Activated CD8-positive, alpha-beta T cell treated with anti-CD3 and anti-CD28 coated beads, Interleukin-2, amount 10 ng/mL, durations not matched to agents 7 days and 5 days (primary cell): ENCODE measurements at regions of chr19 and their contacts with region 1.

Region 1: DNA sequence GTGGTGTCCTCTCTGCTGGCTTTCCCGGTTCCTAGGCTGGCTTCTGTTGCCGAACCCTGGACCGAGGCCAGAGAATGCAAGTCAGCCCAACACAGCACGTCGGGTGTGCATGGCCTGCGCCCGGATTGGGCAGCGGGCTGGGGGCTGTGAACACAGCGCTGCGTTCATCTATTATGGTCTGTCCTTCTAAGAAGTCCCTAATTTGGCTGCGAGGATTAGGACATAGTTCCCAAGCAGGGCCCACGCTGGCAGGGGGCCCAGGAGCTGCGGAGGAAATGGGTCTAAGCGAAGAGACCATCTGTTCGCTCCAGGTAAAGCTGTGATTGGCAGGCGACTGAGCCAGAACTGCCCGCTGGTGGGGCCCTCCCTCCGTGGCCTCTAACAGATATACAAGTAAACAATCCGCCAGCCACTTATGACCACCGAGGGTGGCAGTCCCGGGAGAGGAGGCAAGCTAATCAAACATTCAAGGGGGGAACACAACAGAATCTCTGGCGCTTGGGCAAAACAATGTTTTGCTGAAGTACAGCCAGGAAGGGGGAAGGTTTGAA is 6.0 kb downstream of the SYCE2 start:
- DNase-seq: no peak
- ATAC-seq: no peak
- H3K4me3 Mint-ChIP-seq: no peak overlapping the region
- H3K27ac Mint-ChIP-seq: peak overlapping the region; percentile 98
- H3K4me1 Mint-ChIP-seq: peaks cover 31% of the 10 kb centered on the region
- H3K27me3 Mint-ChIP-seq: no peaks in the 10 kb centered on the region

Region 2: GRCh38 chr19:12867120-12868099 is 45.7 kb before region 1 on chr19:
- CTCF ChIA-PET with region 1: no interaction called
- POLR2A ChIA-PET with region 1: no interaction called
- DNase-seq: peak; percentile 80
- ATAC-seq: peak; percentile 81
- H3K4me3 Mint-ChIP-seq: peak overlapping the region; percentile 64
- H3K27ac Mint-ChIP-seq: peak overlapping the region; percentile 5
- H3K4me1 Mint-ChIP-seq: peaks cover 18% of the 10 kb centered on the region
- H3K27me3 Mint-ChIP-seq: no peaks in the 10 kb centered on the region

Region 3: DNA sequence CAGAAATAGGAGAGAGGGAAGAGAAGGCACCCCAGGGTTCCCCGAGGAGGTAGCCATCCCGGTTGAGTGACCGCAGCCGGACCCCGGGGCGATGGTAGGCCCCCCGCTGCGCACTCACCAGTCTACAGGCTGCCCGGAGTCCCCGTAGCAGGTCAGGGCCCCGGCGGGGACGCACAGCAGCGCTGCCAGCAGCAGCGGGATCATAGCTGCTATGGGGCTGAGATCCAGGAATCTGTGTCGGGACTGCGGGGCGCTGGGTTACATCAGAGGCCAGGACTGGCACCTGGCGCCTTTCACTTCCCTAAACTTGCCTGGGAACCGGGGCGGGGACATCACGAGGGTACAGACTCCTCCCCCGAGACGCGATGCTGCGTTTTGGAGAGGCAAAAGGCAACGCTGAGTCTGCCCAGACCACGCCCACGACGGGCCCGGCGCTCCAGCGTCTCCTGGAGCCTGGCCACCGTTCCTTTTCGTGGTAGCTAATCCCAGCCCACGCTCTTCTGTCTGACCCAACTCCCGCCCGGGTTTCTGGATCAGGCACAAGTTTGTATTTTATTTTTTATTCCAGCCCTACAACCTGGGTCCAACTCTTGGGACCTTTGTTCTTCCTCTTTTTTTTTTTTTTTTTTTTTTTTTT is 31.8 kb before region 1 on chr19 and contains the start of gene DNASE2:
- CTCF ChIA-PET with region 1: interaction called, 23 read pairs
- POLR2A ChIA-PET with region 1: interaction called, 5 read pairs
- DNase-seq: peak; percentile 95
- ATAC-seq: peak; percentile 79
- H3K4me3 Mint-ChIP-seq: peak within 1 kb of the TSS; percentile 81
- H3K27ac Mint-ChIP-seq: peak within 1 kb of the TSS; percentile 87
- H3K4me1 Mint-ChIP-seq: peaks cover 33% of the 10 kb centered on the region
- H3K27me3 Mint-ChIP-seq: no peaks in the 10 kb centered on the region
- total RNA-seq, gene DNASE2: 26.1 to 27.4 TPM

Region 4: GRCh38 chr19:12890787-12891552 is 22.1 kb before region 1 on chr19 and contains the start of gene GCDH:
- CTCF ChIA-PET with region 1: interaction called, 23 read pairs
- POLR2A ChIA-PET with region 1: interaction called, 11 read pairs
- DNase-seq: peak; percentile 99
- ATAC-seq: peak; percentile 96
- H3K4me3 Mint-ChIP-seq: peak within 1 kb of the TSS; percentile 95
- H3K27ac Mint-ChIP-seq: peak within 1 kb of the TSS; percentile 91
- H3K4me1 Mint-ChIP-seq: peaks cover 35% of the 10 kb centered on the region
- H3K27me3 Mint-ChIP-seq: peaks cover 3% of the 10 kb centered on the region
- total RNA-seq, gene GCDH: 39.5 to 42.5 TPM

Region 5: GRCh38 chr19:12899891-12900518 is 13.1 kb before region 1 on chr19:
- CTCF ChIA-PET with region 1: interaction called, 14 read pairs
- POLR2A ChIA-PET with region 1: interaction called, 12 read pairs
- DNase-seq: peak; percentile 41
- ATAC-seq: peak; percentile 72
- H3K4me3 Mint-ChIP-seq: no peak overlapping the region
- H3K27ac Mint-ChIP-seq: peak overlapping the region; percentile 64
- H3K4me1 Mint-ChIP-seq: peaks cover 22% of the 10 kb centered on the region
- H3K27me3 Mint-ChIP-seq: no peaks in the 10 kb centered on the region

Region 6: DNA sequence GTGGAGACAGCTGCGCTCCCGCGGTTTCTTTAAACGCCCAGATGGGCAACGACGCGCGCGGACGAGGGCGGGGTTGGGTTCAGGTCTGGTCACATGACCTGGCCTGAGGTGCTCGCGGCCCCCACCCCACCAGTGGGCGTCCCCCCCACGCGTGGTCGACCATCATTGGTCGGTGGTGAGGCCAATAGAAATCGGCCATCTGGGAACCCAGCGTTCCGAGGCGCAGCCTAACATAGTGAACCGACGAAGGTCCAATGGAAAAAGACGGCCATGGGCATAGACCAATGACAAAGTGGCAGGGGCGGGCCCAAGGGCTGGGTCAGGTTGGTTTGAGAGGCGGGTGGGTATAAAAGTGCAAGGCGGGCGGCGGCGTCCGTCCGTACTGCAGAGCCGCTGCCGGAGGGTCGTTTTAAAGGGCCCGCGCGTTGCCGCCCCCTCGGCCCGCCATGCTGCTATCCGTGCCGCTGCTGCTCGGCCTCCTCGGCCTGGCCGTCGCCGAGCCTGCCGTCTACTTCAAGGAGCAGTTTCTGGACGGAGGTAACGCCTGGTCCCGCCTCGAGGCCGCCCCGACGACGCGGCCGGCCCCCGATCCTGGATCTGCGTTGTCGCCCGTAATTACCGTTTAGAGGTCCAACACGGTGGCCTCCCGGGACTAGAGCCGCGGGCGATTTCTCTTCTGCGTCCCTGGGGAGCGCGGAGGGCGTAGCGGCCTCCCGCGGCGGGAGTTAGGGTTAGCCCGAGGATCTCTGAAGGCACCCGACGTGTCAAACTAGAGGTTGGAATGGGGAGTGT is 25.3 kb after region 1 on chr19 and contains the start of gene CALR:
- CTCF ChIA-PET with region 1: no interaction called
- POLR2A ChIA-PET with region 1: interaction called, 20 read pairs
- DNase-seq: peak; percentile 100
- ATAC-seq: peak; percentile 91
- H3K4me3 Mint-ChIP-seq: peak within 1 kb of the TSS; percentile 99
- H3K27ac Mint-ChIP-seq: peak within 1 kb of the TSS; percentile 97
- H3K4me1 Mint-ChIP-seq: peaks cover 63% of the 10 kb centered on the region
- H3K27me3 Mint-ChIP-seq: no peaks in the 10 kb centered on the region
- total RNA-seq, gene CALR: 875 to 886 TPM